ENCODE measurements at regions of chr19 and their contacts with region 1.

Region 1: GRCh38 chr19:18322759-18323460 is at the start of gene LSM4:
- DNase-seq: peak; percentile 100
- ATAC-seq: peak; percentile 94
- H3K4me3 ChIP-seq: peak within 1 kb of the TSS; percentile 81 to 97 (median 91)
- H3K4me3 Mint-ChIP-seq: peak within 1 kb of the TSS; percentile 87
- H3K27ac ChIP-seq: peak within 1 kb of the TSS; percentile 87 to 90
- H3K27ac Mint-ChIP-seq: peak within 1 kb of the TSS; percentile 94
- H3K4me1 ChIP-seq: peaks cover 29 to 45% of the 10 kb centered on the region in 2 donors
- H3K4me1 Mint-ChIP-seq: peaks cover 47% of the 10 kb centered on the region
- H3K27me3 ChIP-seq: no peaks in the 10 kb centered on the region
- H3K27me3 Mint-ChIP-seq: no peaks in the 10 kb centered on the region
- CTCF ChIP-seq: peak; percentile 62
- total RNA-seq, gene LSM4: 66.3 and 70.0 TPM in 2 replicates

Region 2: DNA sequence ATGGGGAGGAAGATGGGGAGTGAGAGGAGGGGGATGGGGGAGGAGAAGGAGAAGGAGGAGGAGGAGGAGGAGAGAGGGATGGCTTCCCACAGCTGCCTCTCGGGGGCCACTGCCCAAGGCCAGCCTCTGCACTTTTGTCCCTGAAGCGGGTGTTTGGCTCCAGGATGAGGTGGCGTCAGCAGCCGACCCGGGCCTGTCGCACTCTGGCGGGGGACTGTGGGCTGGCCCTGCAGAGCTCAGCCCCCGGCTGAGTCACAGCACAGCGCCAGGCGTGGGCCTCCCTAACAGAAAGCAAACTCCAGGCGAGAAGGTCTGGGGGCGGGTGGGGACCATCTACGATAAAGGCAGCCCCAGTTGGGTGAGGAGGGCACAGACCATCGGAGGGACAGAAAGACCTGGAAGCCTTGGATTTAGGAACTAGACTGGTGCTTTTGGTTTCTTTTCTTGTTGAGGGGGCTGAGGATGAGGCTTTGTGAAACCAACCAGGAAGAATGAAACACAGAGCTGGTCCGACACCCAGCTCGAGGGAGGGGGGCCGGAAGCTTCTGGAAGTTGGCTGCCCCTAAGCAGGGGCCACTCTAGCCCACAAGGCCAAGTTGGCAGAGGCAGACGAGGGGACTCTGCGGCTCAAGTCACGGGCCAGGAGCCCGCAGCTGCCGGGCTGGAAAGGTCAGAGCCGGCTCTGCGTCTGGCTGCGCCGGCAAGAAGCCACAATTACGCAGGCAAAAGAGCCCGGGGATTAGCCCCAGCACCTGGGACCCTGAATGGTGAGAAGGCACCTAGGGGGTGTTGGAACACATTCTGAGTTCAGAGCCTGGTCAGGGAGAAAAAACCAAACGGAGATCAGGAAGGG is 18.2 kb before region 1 on chr19:
- CTCF ChIA-PET with region 1: interaction called, 20 read pairs
- POLR2A ChIA-PET with region 1: interaction called, 26 read pairs
- intact Hi-C with region 1: loop called (anchors 1 kb)
- DNase-seq: peak; percentile 89
- ATAC-seq: peak; percentile 64
- H3K4me3 ChIP-seq: peak overlapping the region in 4 of 5 experiments; percentile 51 to 60 (median 54)
- H3K4me3 Mint-ChIP-seq: peak overlapping the region; percentile 95
- H3K27ac ChIP-seq: peak overlapping the region; percentile 98 to 99
- H3K27ac Mint-ChIP-seq: peak overlapping the region; percentile 100
- H3K4me1 ChIP-seq: peaks cover 44 to 68% of the 10 kb centered on the region in 2 donors
- H3K4me1 Mint-ChIP-seq: peaks cover 44% of the 10 kb centered on the region
- H3K27me3 ChIP-seq: no peaks in the 10 kb centered on the region
- H3K27me3 Mint-ChIP-seq: no peaks in the 10 kb centered on the region
- CTCF ChIP-seq: no peak

Region 3: DNA sequence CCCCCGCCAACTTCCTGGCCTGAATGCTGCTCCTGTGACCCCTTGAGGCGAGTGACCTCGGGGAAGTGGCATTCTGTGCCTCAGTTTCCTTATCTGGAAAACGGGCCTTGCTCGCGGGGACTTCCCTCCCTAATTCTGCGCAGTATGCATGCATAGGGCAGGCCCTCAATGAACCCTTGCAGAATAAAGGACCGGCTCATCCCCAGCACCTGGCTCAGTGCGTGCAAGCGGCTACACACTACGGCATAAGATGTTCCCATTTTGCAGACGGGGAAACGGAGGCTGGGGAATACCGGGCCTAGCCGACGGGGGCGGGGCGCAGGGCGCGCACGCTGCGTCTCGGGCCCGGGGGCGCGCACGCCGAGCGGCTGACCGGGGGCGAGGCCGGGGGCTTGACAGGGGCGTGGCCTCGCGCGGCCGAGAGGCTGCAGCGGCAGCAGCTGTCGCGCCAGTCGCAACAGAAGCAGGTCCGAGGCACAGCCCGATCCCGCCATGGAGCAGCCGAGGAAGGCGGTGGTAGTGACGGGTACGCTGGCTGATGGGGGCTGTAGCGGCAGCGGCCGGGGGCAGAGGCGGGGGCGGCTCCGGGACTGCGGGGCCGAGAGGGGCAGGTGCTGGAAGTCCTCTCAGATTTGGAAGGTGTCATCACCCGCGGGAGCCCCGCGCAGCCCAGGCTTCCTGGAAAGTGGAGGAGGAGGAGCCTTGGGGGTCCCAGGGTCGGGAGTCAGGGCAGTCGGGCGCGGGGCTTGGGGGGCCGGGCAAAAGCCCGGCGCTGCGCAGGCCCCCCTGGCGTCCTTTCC is 17.5 kb after region 1 on chr19 and contains the start of gene PGPEP1:
- CTCF ChIA-PET with region 1: interaction called, 22 read pairs
- POLR2A ChIA-PET with region 1: interaction called, 9 read pairs
- intact Hi-C with region 1: loop called (anchors 2 kb)
- DNase-seq: peak; percentile 81
- ATAC-seq: peak; percentile 66
- H3K4me3 ChIP-seq: peak within 1 kb of the TSS; percentile 41 to 88 (median 81)
- H3K4me3 Mint-ChIP-seq: peak within 1 kb of the TSS; percentile 79
- H3K27ac ChIP-seq: peak within 1 kb of the TSS; percentile 52 to 70
- H3K27ac Mint-ChIP-seq: peak within 1 kb of the TSS; percentile 73
- H3K4me1 ChIP-seq: peaks cover 13 to 18% of the 10 kb centered on the region in 2 donors
- H3K4me1 Mint-ChIP-seq: peaks cover 13% of the 10 kb centered on the region
- H3K27me3 ChIP-seq: no peaks in the 10 kb centered on the region
- H3K27me3 Mint-ChIP-seq: peaks cover 3% of the 10 kb centered on the region
- CTCF ChIP-seq: no peak
- total RNA-seq, gene PGPEP1: 14.1 and 17.6 TPM in 2 replicates

Region 4: DNA sequence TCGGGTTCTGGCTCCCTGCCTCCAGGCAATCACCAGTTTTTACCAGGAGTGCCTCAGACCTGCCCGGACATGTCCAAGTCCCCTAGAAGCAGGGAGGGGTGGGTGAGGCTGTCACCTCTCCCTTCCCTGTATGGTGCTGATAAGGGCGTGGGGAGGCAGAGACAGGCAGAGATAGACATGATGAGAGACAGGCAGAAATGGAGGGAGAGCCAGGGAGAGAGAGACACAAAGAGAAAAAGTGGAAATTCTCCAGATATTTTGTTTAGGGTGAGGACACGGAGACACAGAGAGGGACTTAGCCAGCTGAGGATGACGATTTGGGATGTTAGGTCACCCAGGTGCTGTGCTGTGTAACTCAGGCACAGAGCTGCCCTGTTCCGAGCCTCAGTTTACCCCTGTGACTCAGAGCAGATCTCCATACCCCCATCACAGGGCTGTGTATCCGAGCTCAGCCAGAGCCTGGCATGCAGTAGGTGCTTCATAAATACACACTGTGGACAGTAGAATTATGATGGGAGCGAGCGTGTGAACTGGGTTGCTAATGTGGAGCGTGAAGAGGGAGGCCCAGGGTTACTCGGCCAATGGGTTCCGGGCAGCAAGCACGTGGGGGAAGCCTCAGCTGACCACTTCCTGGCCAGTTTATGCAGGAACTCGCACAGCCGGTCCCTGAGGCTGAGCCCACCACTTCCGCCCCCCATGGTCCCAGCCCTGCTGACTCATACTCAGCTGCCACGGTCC is 51.2 kb after region 1 on chr19:
- CTCF ChIA-PET with region 1: no interaction called
- POLR2A ChIA-PET with region 1: no interaction called
- intact Hi-C with region 1: no loop called
- DNase-seq: peak; percentile 42
- ATAC-seq: peak; percentile 80
- H3K4me3 ChIP-seq: no peak overlapping the region
- H3K4me3 Mint-ChIP-seq: peak overlapping the region; percentile 51
- H3K27ac ChIP-seq: no peak overlapping the region
- H3K27ac Mint-ChIP-seq: peak overlapping the region; percentile 23
- H3K4me1 ChIP-seq: peaks cover 13 to 17% of the 10 kb centered on the region in 2 donors
- H3K4me1 Mint-ChIP-seq: peaks cover 14% of the 10 kb centered on the region
- H3K27me3 ChIP-seq: peaks cover 0 to 5% (median 0%) of the 10 kb centered on the region in 4 experiments
- H3K27me3 Mint-ChIP-seq: peaks cover 10% of the 10 kb centered on the region
- CTCF ChIP-seq: no peak